ENCODE measurements at regions of chr7 and their contacts with region 1.

Region 1: GRCh38 chr7:112449902-112450806 is at the start of gene IFRD1:
- DNase-seq: peak; percentile 95 to 100 (median 99)
- ATAC-seq: peak; percentile 81
- H3K4me3 ChIP-seq: peak within 1 kb of the TSS; percentile 99 to 100
- H3K4me3 Mint-ChIP-seq: peak within 1 kb of the TSS; percentile 98
- H3K27ac ChIP-seq: peak within 1 kb of the TSS; percentile 99
- H3K27ac Mint-ChIP-seq: peak within 1 kb of the TSS; percentile 97
- H3K4me1 ChIP-seq: peaks cover 26% of the 10 kb centered on the region
- H3K4me1 Mint-ChIP-seq: peaks cover 42% of the 10 kb centered on the region
- H3K27me3 ChIP-seq: no peaks in the 10 kb centered on the region
- H3K27me3 Mint-ChIP-seq: no peaks in the 10 kb centered on the region
- CTCF ChIP-seq: no peak
- total RNA-seq, gene IFRD1: 292 to 301 TPM

Region 2: GRCh38 chr7:112206238-112207044 is 243.7 kb before region 1 on chr7 and contains the starts of genes DOCK4 and ZNF277:
- CTCF ChIA-PET with region 1: interaction called, 3 read pairs
- POLR2A ChIA-PET with region 1: interaction called, 30 read pairs
- intact Hi-C with region 1: loop called (anchors 1 kb)
- DNase-seq: peak; percentile 98 to 100 (median 99)
- ATAC-seq: peak; percentile 86
- H3K4me3 ChIP-seq: peak within 1 kb of the TSS; percentile 89 to 94
- H3K4me3 Mint-ChIP-seq: peak within 1 kb of the TSS; percentile 97
- H3K27ac ChIP-seq: peak within 1 kb of the TSS; percentile 60 to 71
- H3K27ac Mint-ChIP-seq: peak within 1 kb of the TSS; percentile 90
- H3K4me1 ChIP-seq: peaks cover 28% of the 10 kb centered on the region
- H3K4me1 Mint-ChIP-seq: peaks cover 48% of the 10 kb centered on the region
- H3K27me3 ChIP-seq: peaks cover 4 to 23% of the 10 kb centered on the region in 2 experiments
- H3K27me3 Mint-ChIP-seq: peaks cover 25% of the 10 kb centered on the region
- CTCF ChIP-seq: no peak
- total RNA-seq, gene DOCK4: 0.16 to 0.17 TPM
- total RNA-seq, gene ZNF277: 19.6 to 22.5 TPM

Region 3: DNA sequence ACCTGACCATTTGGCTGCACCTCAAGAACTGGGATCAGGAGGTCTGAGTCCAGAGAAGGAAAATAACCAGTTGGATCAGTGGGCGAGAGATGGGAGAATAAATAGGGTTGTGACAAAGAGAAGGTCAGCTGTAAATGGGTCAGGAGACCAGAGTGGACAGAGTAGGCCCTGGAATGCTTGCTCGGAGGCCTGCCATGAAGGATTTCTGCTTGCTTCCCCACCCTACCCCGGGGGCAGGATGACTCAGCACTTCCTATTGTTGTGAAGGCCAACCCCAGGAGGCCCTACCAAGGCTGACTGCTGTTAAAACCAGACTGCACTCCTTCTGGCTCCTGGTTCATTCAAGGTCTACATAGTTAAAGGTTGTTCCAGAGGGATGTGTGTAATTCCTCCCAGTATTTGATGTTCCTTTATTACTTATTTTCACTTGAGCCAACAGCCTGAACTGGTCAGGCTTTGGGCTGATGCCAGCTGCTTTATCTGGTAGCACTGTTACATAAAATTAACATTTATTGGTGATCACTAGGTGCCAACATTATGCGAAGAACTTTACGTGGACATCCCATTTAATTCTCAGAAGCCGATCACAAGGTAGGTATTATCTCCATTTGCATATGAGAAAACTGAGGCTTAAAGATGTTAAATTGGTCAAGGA is 27.2 kb before region 1 on chr7:
- CTCF ChIA-PET with region 1: no interaction called
- POLR2A ChIA-PET with region 1: interaction called, 9 read pairs
- intact Hi-C with region 1: loop called in 1 of 2 experiments (anchors 2 kb)
- DNase-seq: peak in 4 of 9 experiments; percentile 6 to 51 (median 11)
- ATAC-seq: no peak
- H3K4me3 ChIP-seq: no peak overlapping the region
- H3K4me3 Mint-ChIP-seq: no peak overlapping the region
- H3K27ac ChIP-seq: no peak overlapping the region
- H3K27ac Mint-ChIP-seq: peak overlapping the region; percentile 76
- H3K4me1 ChIP-seq: peaks cover 19% of the 10 kb centered on the region
- H3K4me1 Mint-ChIP-seq: peaks cover 24% of the 10 kb centered on the region
- H3K27me3 ChIP-seq: no peaks in the 10 kb centered on the region
- H3K27me3 Mint-ChIP-seq: no peaks in the 10 kb centered on the region
- CTCF ChIP-seq: no peak

Region 4: DNA sequence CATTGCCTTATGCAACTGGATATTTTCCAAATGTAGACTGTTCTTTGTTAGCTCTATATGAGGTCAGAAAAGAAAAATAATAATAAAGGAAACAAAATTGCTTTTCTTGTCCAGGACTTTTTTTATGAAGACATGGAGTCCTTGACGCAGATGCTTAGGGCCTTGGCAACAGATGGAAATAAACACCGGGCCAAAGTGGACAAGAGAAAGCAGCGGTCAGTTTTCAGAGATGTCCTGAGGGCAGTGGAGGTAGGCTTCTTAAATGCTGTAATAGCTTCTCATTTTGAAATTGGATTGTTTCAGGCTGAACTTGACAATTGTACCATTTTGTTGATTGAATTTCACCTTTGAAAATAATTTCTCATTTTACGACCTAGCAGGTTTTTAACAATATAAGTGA is 17.7 kb after region 1 on chr7:
- CTCF ChIA-PET with region 1: no interaction called
- POLR2A ChIA-PET with region 1: interaction called, 18 read pairs
- intact Hi-C with region 1: no loop called
- DNase-seq: no peak
- ATAC-seq: no peak
- H3K4me3 ChIP-seq: no peak overlapping the region
- H3K4me3 Mint-ChIP-seq: no peak overlapping the region
- H3K27ac ChIP-seq: no peak overlapping the region
- H3K27ac Mint-ChIP-seq: no peak overlapping the region
- H3K4me1 ChIP-seq: no peaks in the 10 kb centered on the region
- H3K4me1 Mint-ChIP-seq: peaks cover 7% of the 10 kb centered on the region
- H3K27me3 ChIP-seq: no peaks in the 10 kb centered on the region
- H3K27me3 Mint-ChIP-seq: no peaks in the 10 kb centered on the region
- CTCF ChIP-seq: no peak

Region 5: GRCh38 chr7:112939574-112940314 is 489.6 kb after region 1 on chr7:
- CTCF ChIA-PET with region 1: no interaction called
- POLR2A ChIA-PET with region 1: interaction called, 13 read pairs
- intact Hi-C with region 1: loop called (anchors 1 to 2 kb)
- DNase-seq: peak; percentile 98 to 100 (median 99)
- ATAC-seq: peak; percentile 94
- H3K4me3 ChIP-seq: peak overlapping the region; percentile 76 to 89
- H3K4me3 Mint-ChIP-seq: peak overlapping the region; percentile 93
- H3K27ac ChIP-seq: peak overlapping the region; percentile 75
- H3K27ac Mint-ChIP-seq: peak overlapping the region; percentile 92
- H3K4me1 ChIP-seq: peaks cover 27% of the 10 kb centered on the region
- H3K4me1 Mint-ChIP-seq: peaks cover 42% of the 10 kb centered on the region
- H3K27me3 ChIP-seq: no peaks in the 10 kb centered on the region
- H3K27me3 Mint-ChIP-seq: no peaks in the 10 kb centered on the region
- CTCF ChIP-seq: no peak

Region 6: DNA sequence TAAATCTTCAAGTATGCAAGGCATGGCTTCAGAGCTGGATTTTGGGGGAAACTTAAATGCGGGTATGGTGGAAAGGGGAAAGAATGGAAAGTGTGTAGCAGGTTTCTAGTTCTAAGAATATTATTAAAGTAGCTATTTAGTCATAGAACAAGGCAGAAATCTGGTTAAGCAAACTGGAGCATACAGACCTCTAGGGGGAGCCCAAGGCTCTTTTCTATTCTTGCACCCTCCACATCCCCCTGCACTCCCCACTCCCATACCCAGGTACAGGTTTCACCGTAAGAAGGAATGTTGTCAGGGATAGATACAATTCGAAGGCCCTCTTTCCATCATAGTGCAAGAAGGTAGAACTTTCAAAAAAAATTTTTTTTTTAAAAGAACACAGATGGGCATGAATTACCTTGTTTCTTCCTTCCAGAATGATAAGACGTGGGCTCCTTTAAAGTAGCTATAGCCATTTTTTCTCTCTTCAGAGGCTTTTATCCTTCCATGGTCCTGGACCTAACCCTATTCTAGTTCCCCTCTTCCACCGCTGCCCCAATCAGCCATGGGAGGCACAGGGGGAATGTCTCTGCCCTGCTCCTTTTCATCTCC is 709.7 kb after region 1 on chr7:
- CTCF ChIA-PET with region 1: no interaction called
- POLR2A ChIA-PET with region 1: no interaction called
- intact Hi-C with region 1: no loop called
- DNase-seq: peak in 1 of 9 experiments; percentile 3
- ATAC-seq: no peak
- H3K4me3 ChIP-seq: no peak overlapping the region
- H3K4me3 Mint-ChIP-seq: no peak overlapping the region
- H3K27ac ChIP-seq: no peak overlapping the region
- H3K27ac Mint-ChIP-seq: no peak overlapping the region
- H3K4me1 ChIP-seq: no peaks in the 10 kb centered on the region
- H3K4me1 Mint-ChIP-seq: no peaks in the 10 kb centered on the region
- H3K27me3 ChIP-seq: peaks cover 0 to 5% of the 10 kb centered on the region in 2 experiments
- H3K27me3 Mint-ChIP-seq: peaks cover 13% of the 10 kb centered on the region
- CTCF ChIP-seq: peak; percentile 16

Measured in CD8-positive, alpha-beta T cell (primary cell).